MCF 10A (cell line): ENCODE measurements at regions of chr4 and their contacts with region 1.

Region 1: GRCh38 chr4:112231779-112232713 is at the start of gene AP1AR:
- DNase-seq: peak; percentile 77
- H3K4me3 Mint-ChIP-seq: peak within 1 kb of the TSS; percentile 99
- H3K27ac Mint-ChIP-seq: peak within 1 kb of the TSS; percentile 98
- H3K4me1 Mint-ChIP-seq: peaks cover 15% of the 10 kb centered on the region
- H3K27me3 Mint-ChIP-seq: no peaks in the 10 kb centered on the region
- CTCF ChIP-seq: peak; percentile 9
- total RNA-seq, gene AP1AR: 38.4 and 39.7 TPM in 2 replicates

Region 2: DNA sequence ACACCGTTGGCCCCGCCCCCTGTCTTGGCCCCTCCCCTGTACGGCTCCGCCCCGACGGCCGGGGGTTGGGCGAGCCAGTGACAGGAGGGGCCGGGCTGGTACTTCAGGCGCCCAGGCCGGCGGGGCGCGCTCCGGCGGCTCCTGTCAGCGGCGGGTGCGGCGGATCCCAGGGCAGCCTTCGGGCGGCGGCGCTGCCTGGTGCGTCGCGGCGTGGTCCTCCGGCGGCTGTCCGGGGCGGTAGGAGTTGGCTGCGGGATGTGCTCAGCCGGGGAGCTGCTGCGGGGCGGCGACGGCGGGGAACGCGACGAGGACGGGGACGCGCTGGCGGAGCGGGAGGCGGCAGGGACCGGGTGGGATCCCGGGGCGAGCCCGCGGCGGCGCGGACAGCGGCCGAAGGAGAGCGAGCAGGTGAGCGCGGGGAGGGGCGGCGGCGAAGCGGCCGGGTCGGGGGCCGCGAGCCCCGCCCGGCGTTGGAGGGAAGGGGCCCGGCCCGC is 86.7 kb before region 1 on chr4 and contains the start of gene FAM241A:
- CTCF ChIA-PET with region 1: no interaction called
- POLR2A ChIA-PET with region 1: interaction called, 57 read pairs
- intact Hi-C with region 1: loop called (anchors 1 kb)
- DNase-seq: peak; percentile 83
- H3K4me3 Mint-ChIP-seq: peak within 1 kb of the TSS; percentile 79
- H3K27ac Mint-ChIP-seq: peak within 1 kb of the TSS; percentile 63
- H3K4me1 Mint-ChIP-seq: peaks cover 16% of the 10 kb centered on the region
- H3K27me3 Mint-ChIP-seq: no peaks in the 10 kb centered on the region
- CTCF ChIP-seq: no peak
- total RNA-seq, gene FAM241A: 8.2 and 10.9 TPM in 2 replicates

Region 3: GRCh38 chr4:112214390-112215264 is 17.4 kb before region 1 on chr4:
- CTCF ChIA-PET with region 1: interaction called, 67 read pairs
- POLR2A ChIA-PET with region 1: interaction called, 141 read pairs
- intact Hi-C with region 1: loop called (anchors 1 kb)
- DNase-seq: peak; percentile 61
- H3K4me3 Mint-ChIP-seq: no peak overlapping the region
- H3K27ac Mint-ChIP-seq: peak overlapping the region; percentile 90
- H3K4me1 Mint-ChIP-seq: peaks cover 12% of the 10 kb centered on the region
- H3K27me3 Mint-ChIP-seq: no peaks in the 10 kb centered on the region
- CTCF ChIP-seq: peak; percentile 48

Region 4: DNA sequence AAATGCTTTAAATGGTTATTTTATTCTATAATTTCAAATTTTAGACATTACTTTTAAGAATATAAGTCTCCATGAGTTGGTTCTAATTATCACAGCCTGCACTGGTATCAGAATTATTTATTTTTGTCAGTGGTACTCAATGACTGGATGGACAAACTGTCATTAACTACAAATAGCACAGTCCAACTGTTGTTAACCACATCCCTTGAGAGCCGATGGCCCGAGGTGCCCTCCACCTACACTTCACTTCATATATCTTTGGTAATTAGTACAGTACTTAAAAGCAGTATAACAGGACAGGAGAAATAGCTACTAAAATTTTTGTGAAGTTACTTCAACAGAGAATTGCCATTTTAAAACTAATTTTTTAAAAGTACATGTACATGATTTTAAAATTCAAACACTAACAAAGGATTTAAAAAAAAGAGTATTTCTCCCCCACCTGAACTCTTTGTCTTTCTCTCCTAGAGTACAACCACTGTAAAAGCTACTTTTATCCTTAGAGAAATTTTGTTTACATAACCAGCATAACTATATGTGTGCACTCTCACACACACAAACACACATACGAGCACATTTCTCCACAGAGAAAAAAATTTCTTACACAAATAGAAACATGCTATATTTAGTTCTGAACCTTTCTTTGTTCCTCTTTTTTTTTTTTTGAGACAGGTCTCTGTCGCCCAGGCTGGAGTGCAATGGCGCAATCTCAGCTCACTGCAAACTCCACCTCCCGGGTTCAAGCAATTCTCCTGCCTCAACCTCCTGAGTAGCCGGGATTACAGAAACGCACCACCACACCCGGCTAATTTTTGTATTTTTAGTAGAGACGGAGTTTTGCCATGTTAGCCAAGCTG is 47.2 kb after region 1 on chr4:
- CTCF ChIA-PET with region 1: interaction called, 5 read pairs
- POLR2A ChIA-PET with region 1: interaction called, 25 read pairs
- intact Hi-C with region 1: loop called (anchors 5 kb)
- DNase-seq: peak; percentile 17
- H3K4me3 Mint-ChIP-seq: peak overlapping the region; percentile 67
- H3K27ac Mint-ChIP-seq: peak overlapping the region; percentile 61
- H3K4me1 Mint-ChIP-seq: peaks cover 51% of the 10 kb centered on the region
- H3K27me3 Mint-ChIP-seq: no peaks in the 10 kb centered on the region
- CTCF ChIP-seq: no peak

Region 5: DNA sequence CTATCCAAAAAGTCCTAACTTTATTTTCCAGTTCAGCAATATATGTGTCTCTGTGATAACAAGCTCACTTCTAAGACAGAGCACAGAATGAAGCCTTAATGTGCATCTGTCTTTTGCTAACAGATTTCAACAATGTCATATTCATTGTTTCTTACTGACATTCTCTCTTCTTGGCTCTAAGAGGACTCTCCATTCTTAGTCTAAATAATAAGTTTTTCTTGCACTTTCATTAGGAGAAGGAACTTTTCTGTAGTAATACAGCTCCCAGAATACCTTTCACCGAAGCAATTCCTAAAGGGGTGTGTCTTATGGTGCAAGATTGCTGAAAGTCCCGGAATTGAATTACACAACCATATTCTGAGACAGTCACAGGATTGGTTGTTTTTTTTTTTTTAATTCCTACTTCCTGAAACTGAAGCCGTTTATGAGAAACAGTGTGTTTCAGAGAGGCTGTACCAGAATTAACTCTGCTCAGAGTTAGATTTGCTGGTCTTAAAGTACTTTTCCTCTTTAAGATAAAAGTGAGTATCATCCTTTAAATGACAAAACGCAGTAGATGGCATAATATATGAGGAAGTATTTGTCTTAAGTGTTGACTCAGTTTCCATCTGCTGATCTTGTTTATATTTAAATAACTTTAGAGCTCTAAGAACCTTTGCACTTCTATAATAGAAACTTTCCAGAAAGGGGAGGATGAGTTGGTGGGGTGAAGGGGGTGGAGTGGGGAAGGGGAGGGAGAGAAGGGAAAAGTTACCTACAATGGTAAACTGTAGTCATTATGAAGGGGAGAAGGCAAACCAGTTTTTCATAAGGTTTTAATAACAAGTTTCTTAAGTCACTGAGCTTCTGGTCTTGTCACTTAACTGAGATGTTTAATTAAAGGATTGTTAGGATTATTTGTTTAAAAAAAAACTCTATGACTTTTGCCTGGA is 65.2 kb after region 1 on chr4 and contains the start of gene ALPK1:
- CTCF ChIA-PET with region 1: interaction called, 5 read pairs
- POLR2A ChIA-PET with region 1: interaction called, 17 read pairs
- intact Hi-C with region 1: no loop called
- DNase-seq: peak; percentile 92
- H3K4me3 Mint-ChIP-seq: peak within 1 kb of the TSS; percentile 72
- H3K27ac Mint-ChIP-seq: peak within 1 kb of the TSS; percentile 91
- H3K4me1 Mint-ChIP-seq: no peaks in the 10 kb centered on the region
- H3K27me3 Mint-ChIP-seq: no peaks in the 10 kb centered on the region
- CTCF ChIP-seq: no peak
- total RNA-seq, gene ALPK1: 20.3 and 41.0 TPM in 2 replicates

Region 6: GRCh38 chr4:112604589-112604988 is 372.5 kb after region 1 on chr4:
- CTCF ChIA-PET with region 1: no interaction called
- POLR2A ChIA-PET with region 1: no interaction called
- intact Hi-C with region 1: loop called (anchors 5 kb)
- DNase-seq: peak; percentile 66
- H3K4me3 Mint-ChIP-seq: no peak overlapping the region
- H3K27ac Mint-ChIP-seq: no peak overlapping the region
- H3K4me1 Mint-ChIP-seq: no peaks in the 10 kb centered on the region
- H3K27me3 Mint-ChIP-seq: no peaks in the 10 kb centered on the region
- CTCF ChIP-seq: peak; percentile 47